PC-3 (cell line): ENCODE measurements at regions of chr5 and their contacts with region 1.

Region 1: DNA sequence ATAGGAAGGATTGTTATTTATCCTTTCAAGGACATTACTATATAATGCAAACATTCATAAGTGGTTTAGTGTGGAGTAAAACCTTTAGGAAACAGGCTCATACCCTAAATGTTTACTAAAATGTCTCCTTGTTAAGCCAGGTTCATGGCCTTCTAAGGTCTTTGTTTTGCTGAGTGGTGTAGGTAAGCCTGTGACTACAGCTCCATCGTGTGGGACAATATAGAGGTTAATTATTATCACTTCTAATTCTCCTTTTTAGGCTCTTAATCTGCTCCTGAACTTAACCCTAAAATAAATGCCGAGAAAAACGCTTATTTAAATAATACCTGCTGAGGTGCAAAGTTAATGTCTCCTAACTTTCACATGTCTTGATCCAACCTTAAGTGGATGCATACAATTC is 43.8 kb downstream of the SPINK5 start:
- DNase-seq: peak; percentile 69
- ATAC-seq: peak; percentile 67
- H3K4me3 ChIP-seq: no peak overlapping the region
- H3K27ac ChIP-seq: no peak overlapping the region
- H3K4me1 ChIP-seq: 0 out of 2 replicates have a peak, but pooled peaks cover 5% of the 10 kb centered on the region
- H3K27me3 ChIP-seq: no peaks in the 10 kb centered on the region
- CTCF ChIP-seq: peak; percentile 80

Region 2: GRCh38 chr5:147835386-147835798 is 272.2 kb before region 1 on chr5:
- CTCF ChIA-PET with region 1: no interaction called
- POLR2A ChIA-PET with region 1: no interaction called
- intact Hi-C with region 1: loop called (anchors 1 kb)
- DNase-seq: peak; percentile 97
- ATAC-seq: peak; percentile 98
- H3K4me3 ChIP-seq: no peak overlapping the region
- H3K27ac ChIP-seq: peak overlapping the region; percentile 12
- H3K4me1 ChIP-seq: peaks cover 23% of the 10 kb centered on the region
- H3K27me3 ChIP-seq: no peaks in the 10 kb centered on the region
- CTCF ChIP-seq: no peak

Region 3: DNA sequence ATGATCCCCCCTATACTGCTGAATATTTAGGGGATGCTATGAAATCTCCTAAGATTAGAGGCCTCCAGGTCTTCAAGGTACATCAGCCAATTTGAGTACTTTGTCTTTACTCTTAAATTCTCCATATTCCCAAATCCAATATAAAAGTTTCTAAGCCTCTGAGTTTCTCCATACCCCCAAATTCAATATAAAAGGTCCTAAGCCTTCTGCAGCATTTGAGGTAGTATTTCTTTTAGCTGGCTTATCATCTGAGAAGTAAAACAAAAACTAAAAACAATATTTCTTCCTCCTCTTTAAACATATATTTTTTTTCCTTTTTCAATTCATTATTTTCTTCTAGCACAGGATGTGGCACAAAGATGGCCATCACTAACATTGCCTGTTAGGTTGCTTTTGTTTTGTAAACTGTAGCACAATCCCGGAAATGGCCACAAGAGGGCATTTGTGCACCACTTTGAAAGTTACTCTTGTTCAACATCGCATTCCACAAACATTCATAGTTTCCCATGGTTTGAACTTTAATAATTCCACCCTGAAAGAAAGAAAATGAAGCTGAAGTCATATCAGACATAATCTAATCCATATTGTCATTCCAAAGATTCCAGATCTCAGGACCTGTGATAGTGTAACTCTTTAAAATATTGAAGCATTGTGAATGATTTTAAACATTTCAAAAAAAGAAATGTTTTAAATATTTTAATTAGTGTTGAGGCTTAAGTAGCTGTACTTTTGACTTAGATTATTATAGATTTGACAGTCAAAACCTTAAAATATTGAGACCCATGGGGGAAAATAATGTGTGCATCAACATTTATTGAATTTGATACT is 250.1 kb before region 1 on chr5:
- CTCF ChIA-PET with region 1: interaction called, 15 read pairs
- POLR2A ChIA-PET with region 1: no interaction called
- intact Hi-C with region 1: loop called (anchors 1 kb)
- DNase-seq: peak; percentile 95
- ATAC-seq: peak; percentile 79
- H3K4me3 ChIP-seq: no peak overlapping the region
- H3K27ac ChIP-seq: no peak overlapping the region
- H3K4me1 ChIP-seq: peaks cover 18% of the 10 kb centered on the region
- H3K27me3 ChIP-seq: no peaks in the 10 kb centered on the region
- CTCF ChIP-seq: peak; percentile 98

Region 4: DNA sequence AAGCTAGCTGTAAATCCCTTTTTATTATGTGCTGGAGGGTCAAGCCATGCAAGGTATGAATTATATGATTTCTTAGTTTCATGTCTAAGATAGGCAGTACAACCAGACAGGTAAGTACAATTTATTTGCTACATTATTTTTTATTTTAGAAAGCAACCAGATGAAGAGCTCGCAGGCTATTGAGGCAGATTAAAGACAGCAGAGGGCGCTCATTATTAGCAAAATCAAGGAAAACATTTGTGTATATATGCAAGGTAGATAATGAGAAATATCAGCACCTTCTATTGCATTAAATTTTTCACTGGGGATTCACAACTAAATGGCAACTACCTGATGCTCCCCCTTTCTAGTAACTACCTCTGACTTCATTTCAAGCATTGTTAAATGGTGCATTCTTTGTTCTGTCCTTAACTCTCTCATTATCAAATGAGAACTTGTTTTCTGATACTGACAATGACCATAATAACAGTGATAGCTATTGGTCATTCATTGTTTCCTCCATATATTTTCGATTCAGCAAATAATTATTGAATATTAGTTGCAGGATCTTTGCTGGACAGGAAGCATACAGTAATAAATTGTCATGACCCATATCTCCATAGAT is 220.5 kb before region 1 on chr5:
- CTCF ChIA-PET with region 1: interaction called, 3 read pairs
- POLR2A ChIA-PET with region 1: no interaction called
- intact Hi-C with region 1: loop called (anchors 1 kb)
- DNase-seq: peak; percentile 80
- ATAC-seq: peak; percentile 63
- H3K4me3 ChIP-seq: no peak overlapping the region
- H3K27ac ChIP-seq: peak overlapping the region; percentile 97
- H3K4me1 ChIP-seq: peaks cover 51% of the 10 kb centered on the region
- H3K27me3 ChIP-seq: no peaks in the 10 kb centered on the region
- CTCF ChIP-seq: peak; percentile 96

Region 5: GRCh38 chr5:148090773-148091221 is 16.8 kb before region 1 on chr5:
- CTCF ChIA-PET with region 1: interaction called, 4 read pairs
- POLR2A ChIA-PET with region 1: interaction called, 5 read pairs
- intact Hi-C with region 1: loop called (anchors 1 kb)
- DNase-seq: peak; percentile 88
- ATAC-seq: peak; percentile 85
- H3K4me3 ChIP-seq: peak overlapping the region; percentile 47
- H3K27ac ChIP-seq: peak overlapping the region; percentile 11
- H3K4me1 ChIP-seq: peaks cover 22% of the 10 kb centered on the region
- H3K27me3 ChIP-seq: no peaks in the 10 kb centered on the region
- CTCF ChIP-seq: no peak